Motor neuron (in vitro differentiated cells): ENCODE measurements at regions of chr5 and their contacts with region 1.

Region 1: GRCh38 chr5:122532035-122532434 is 220.0 kb downstream of the SNCAIP start:
- ATAC-seq: no peak
- H3K4me3 ChIP-seq: no peak overlapping the region
- H3K27ac ChIP-seq: no peak overlapping the region
- H3K4me1 ChIP-seq: peaks cover 0 to 3% of the 10 kb centered on the region in 2 donors

Region 2: DNA sequence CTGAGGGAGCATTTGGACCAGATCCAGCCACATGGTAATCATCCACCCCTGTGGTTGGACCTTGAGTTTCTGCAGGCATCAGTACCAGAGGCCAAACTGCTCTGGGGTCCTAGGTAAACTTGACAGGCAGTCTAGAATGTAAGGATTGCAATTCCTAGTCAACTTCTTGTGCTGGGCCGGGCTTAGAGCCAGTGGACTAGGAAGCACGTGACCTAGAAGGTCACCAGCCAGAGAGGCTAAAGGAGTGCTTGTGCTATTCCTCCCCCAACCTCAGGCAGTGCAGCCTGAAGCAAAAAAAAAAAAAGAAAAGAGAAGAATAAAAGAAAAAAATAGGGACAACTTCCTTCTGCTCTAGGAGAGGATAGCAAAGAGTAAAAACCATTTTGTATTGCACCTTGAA is 1086.5 kb before region 1 on chr5:
- in situ Hi-C with region 1: no loop called
- ATAC-seq: no peak
- H3K4me3 ChIP-seq: no peak overlapping the region
- H3K27ac ChIP-seq: no peak overlapping the region
- H3K4me1 ChIP-seq: no peaks in the 10 kb centered on the region

Region 3: DNA sequence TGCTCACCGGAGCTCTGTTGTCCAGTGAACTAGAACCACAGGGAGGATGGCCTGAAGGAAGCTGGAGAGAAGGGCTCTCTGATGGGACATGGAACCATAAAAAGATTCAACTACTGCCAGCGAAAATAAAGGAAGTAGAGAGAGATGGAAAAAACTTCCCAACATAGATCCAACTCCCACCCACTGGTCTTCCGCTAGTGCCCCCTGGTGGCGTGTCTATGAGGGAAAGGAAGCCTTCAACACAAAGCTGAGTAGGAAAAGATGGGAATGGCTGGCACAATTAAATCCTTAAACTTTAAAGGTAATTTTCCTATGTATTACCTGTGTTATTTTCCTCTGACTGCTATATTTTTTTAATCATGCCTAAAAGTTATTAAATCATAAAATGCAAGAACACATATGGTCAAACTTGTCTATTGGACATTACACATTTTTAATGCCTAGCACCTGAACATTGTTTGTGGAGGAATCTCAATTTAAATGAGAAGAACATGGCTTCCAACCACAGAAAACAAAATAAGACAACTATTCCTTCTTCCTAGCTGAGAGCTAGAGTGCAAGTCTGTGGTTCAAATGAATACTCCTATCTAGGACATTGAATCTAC is 839.6 kb after region 1 on chr5:
- in situ Hi-C with region 1: loop called in 1 of 9 experiments (anchors 25 kb)
- ATAC-seq: peak in 2 of 8 experiments; percentile 42 to 45
- H3K4me3 ChIP-seq: no peak overlapping the region
- H3K27ac ChIP-seq: no peak overlapping the region
- H3K4me1 ChIP-seq: no peaks in the 10 kb centered on the region